ENCODE measurements at regions of chrX and their contacts with region 1.

Region 1: GRCh38 chrX:136754651-136755050 is 26.1 kb downstream of the ARHGEF6 start:
- DNase-seq: peak; percentile 81

Region 2: GRCh38 chrX:136797787-136798186 is 43.1 kb after region 1 on chrX:
- intact Hi-C with region 1: loop called in 1 of 2 experiments (anchors 2 kb)
- DNase-seq: no peak

Measured in posterior vena cava (tissue), 2 donors.